Naive thymus-derived CD4-positive, alpha-beta T cell (primary cell): ENCODE measurements at regions of chr2 and their contacts with region 1.

Region 1: GRCh38 chr2:202634556-202635427 is at the start of gene FAM117B:
- DNase-seq: peak; percentile 90 to 99 (median 98)
- ATAC-seq: peak; percentile 93
- H3K4me3 ChIP-seq: peak within 1 kb of the TSS; percentile 81
- H3K4me3 Mint-ChIP-seq: peak within 1 kb of the TSS in 9 of 10 donors; percentile 93 to 98 (median 97)
- H3K27ac ChIP-seq: peak within 1 kb of the TSS; percentile 81
- H3K27ac Mint-ChIP-seq: peak within 1 kb of the TSS; percentile 92 to 99 (median 96)
- H3K4me1 ChIP-seq: peaks cover 22 to 29% of the 10 kb centered on the region in 2 donors
- H3K4me1 Mint-ChIP-seq: peaks cover 27 to 66% (median 61%) of the 10 kb centered on the region in 7 donors
- H3K27me3 ChIP-seq: no peaks in the 10 kb centered on the region
- H3K27me3 Mint-ChIP-seq: no peaks in the 10 kb centered on the region
- total RNA-seq, gene FAM117B: 12.8 to 57.9 (median 48.8) TPM

Region 2: GRCh38 chr2:201257956-201258665 is 1376.7 kb before region 1 on chr2:
- CTCF ChIA-PET with region 1: no interaction called
- POLR2A ChIA-PET with region 1: no interaction called
- intact Hi-C with region 1: loop called (anchors 5 to 10 kb)
- DNase-seq: peak; percentile 72 to 99 (median 98)
- ATAC-seq: peak; percentile 84
- H3K4me3 ChIP-seq: peak overlapping the region; percentile 80
- H3K4me3 Mint-ChIP-seq: peak overlapping the region; percentile 85 to 100 (median 94)
- H3K27ac ChIP-seq: peak overlapping the region; percentile 91
- H3K27ac Mint-ChIP-seq: peak overlapping the region; percentile 95 to 99 (median 98)
- H3K4me1 ChIP-seq: peaks cover 63 to 71% of the 10 kb centered on the region in 2 donors
- H3K4me1 Mint-ChIP-seq: peaks cover 44 to 91% (median 75%) of the 10 kb centered on the region in 7 donors
- H3K27me3 ChIP-seq: no peaks in the 10 kb centered on the region
- H3K27me3 Mint-ChIP-seq: no peaks in the 10 kb centered on the region

Region 3: GRCh38 chr2:202660796-202661195 is 26.0 kb after region 1 on chr2:
- CTCF ChIA-PET with region 1: no interaction called
- POLR2A ChIA-PET with region 1: interaction called, 108 read pairs
- intact Hi-C with region 1: no loop called
- DNase-seq: no peak
- ATAC-seq: no peak
- H3K4me3 ChIP-seq: no peak overlapping the region
- H3K4me3 Mint-ChIP-seq: peak overlapping the region in 6 of 10 donors; percentile 35 to 89 (median 56)
- H3K27ac ChIP-seq: no peak overlapping the region
- H3K27ac Mint-ChIP-seq: peak overlapping the region in 6 of 9 donors; percentile 30 to 87 (median 78)
- H3K4me1 ChIP-seq: peaks cover 0 to 56% of the 10 kb centered on the region in 2 donors
- H3K4me1 Mint-ChIP-seq: peaks cover 42 to 98% (median 87%) of the 10 kb centered on the region in 7 donors
- H3K27me3 ChIP-seq: no peaks in the 10 kb centered on the region
- H3K27me3 Mint-ChIP-seq: no peaks in the 10 kb centered on the region

Region 4: GRCh38 chr2:202723746-202724145 is 89.0 kb after region 1 on chr2:
- CTCF ChIA-PET with region 1: no interaction called
- POLR2A ChIA-PET with region 1: interaction called, 10 read pairs
- intact Hi-C with region 1: no loop called
- DNase-seq: no peak
- ATAC-seq: no peak
- H3K4me3 ChIP-seq: no peak overlapping the region
- H3K4me3 Mint-ChIP-seq: no peak overlapping the region
- H3K27ac ChIP-seq: no peak overlapping the region
- H3K27ac Mint-ChIP-seq: peak overlapping the region in 1 of 9 donors; percentile 36
- H3K4me1 ChIP-seq: peaks cover 0 to 11% of the 10 kb centered on the region in 2 donors
- H3K4me1 Mint-ChIP-seq: peaks cover 0 to 74% (median 52%) of the 10 kb centered on the region in 7 donors
- H3K27me3 ChIP-seq: no peaks in the 10 kb centered on the region
- H3K27me3 Mint-ChIP-seq: no peaks in the 10 kb centered on the region

Region 5: GRCh38 chr2:202815548-202816360 is 181.0 kb after region 1 on chr2:
- CTCF ChIA-PET with region 1: no interaction called
- POLR2A ChIA-PET with region 1: no interaction called
- intact Hi-C with region 1: no loop called
- DNase-seq: no peak
- ATAC-seq: no peak
- H3K4me3 ChIP-seq: no peak overlapping the region
- H3K4me3 Mint-ChIP-seq: no peak overlapping the region
- H3K27ac ChIP-seq: no peak overlapping the region
- H3K27ac Mint-ChIP-seq: no peak overlapping the region
- H3K4me1 ChIP-seq: no peaks in the 10 kb centered on the region
- H3K4me1 Mint-ChIP-seq: peaks cover 0 to 1% (median 0%) of the 10 kb centered on the region in 7 donors
- H3K27me3 ChIP-seq: no peaks in the 10 kb centered on the region
- H3K27me3 Mint-ChIP-seq: no peaks in the 10 kb centered on the region

Region 6: GRCh38 chr2:202911512-202912341 is 276.9 kb after region 1 on chr2 and contains the starts of genes CARF and WDR12:
- CTCF ChIA-PET with region 1: no interaction called
- POLR2A ChIA-PET with region 1: interaction called, 4 read pairs
- intact Hi-C with region 1: loop called (anchors 1 kb)
- DNase-seq: peak; percentile 81 to 93 (median 89)
- ATAC-seq: peak; percentile 93
- H3K4me3 ChIP-seq: peak within 1 kb of the TSS; percentile 82
- H3K4me3 Mint-ChIP-seq: peak within 1 kb of the TSS; percentile 90 to 100 (median 98)
- H3K27ac ChIP-seq: peak within 1 kb of the TSS; percentile 79
- H3K27ac Mint-ChIP-seq: peak within 1 kb of the TSS; percentile 93 to 99 (median 97)
- H3K4me1 ChIP-seq: peaks cover 4 to 11% of the 10 kb centered on the region in 2 donors
- H3K4me1 Mint-ChIP-seq: peaks cover 24 to 50% (median 34%) of the 10 kb centered on the region in 7 donors
- H3K27me3 ChIP-seq: no peaks in the 10 kb centered on the region
- H3K27me3 Mint-ChIP-seq: no peaks in the 10 kb centered on the region
- total RNA-seq, gene CARF: 10.2 to 31.2 (median 15.4) TPM
- total RNA-seq, gene WDR12: 17.2 to 50.4 (median 20.8) TPM

Region 7: GRCh38 chr2:203934041-203934492 is 1299.3 kb after region 1 on chr2:
- CTCF ChIA-PET with region 1: no interaction called
- POLR2A ChIA-PET with region 1: no interaction called
- intact Hi-C with region 1: loop called in 1 of 2 experiments (anchors 5 kb)
- DNase-seq: peak in 8 of 9 donors; percentile 37 to 80 (median 60)
- ATAC-seq: peak; percentile 31
- H3K4me3 ChIP-seq: peak overlapping the region; percentile 22
- H3K4me3 Mint-ChIP-seq: peak overlapping the region; percentile 69 to 92 (median 78)
- H3K27ac ChIP-seq: peak overlapping the region; percentile 71
- H3K27ac Mint-ChIP-seq: peak overlapping the region; percentile 87 to 97 (median 93)
- H3K4me1 ChIP-seq: peaks cover 40 to 42% of the 10 kb centered on the region in 2 donors
- H3K4me1 Mint-ChIP-seq: peaks cover 33 to 68% (median 55%) of the 10 kb centered on the region in 7 donors
- H3K27me3 ChIP-seq: no peaks in the 10 kb centered on the region
- H3K27me3 Mint-ChIP-seq: no peaks in the 10 kb centered on the region

Region 8: GRCh38 chr2:204060841-204061240 is 1426.0 kb after region 1 on chr2:
- CTCF ChIA-PET with region 1: no interaction called
- POLR2A ChIA-PET with region 1: no interaction called
- intact Hi-C with region 1: no loop called
- DNase-seq: no peak
- ATAC-seq: no peak
- H3K4me3 ChIP-seq: no peak overlapping the region
- H3K4me3 Mint-ChIP-seq: no peak overlapping the region
- H3K27ac ChIP-seq: no peak overlapping the region
- H3K27ac Mint-ChIP-seq: peak overlapping the region in 1 of 9 donors; percentile 75
- H3K4me1 ChIP-seq: no peaks in the 10 kb centered on the region
- H3K4me1 Mint-ChIP-seq: peaks cover 0 to 2% (median 0%) of the 10 kb centered on the region in 7 donors
- H3K27me3 ChIP-seq: no peaks in the 10 kb centered on the region
- H3K27me3 Mint-ChIP-seq: peaks cover 0 to 12% (median 0%) of the 10 kb centered on the region in 5 donors